ENCODE measurements at regions of chr3 and their contacts with region 1.

Region 1: GRCh38 chr3:39911465-39912309 is 102.3 kb downstream of the MYRIP start:
- DNase-seq: peak; percentile 97
- H3K4me3 ChIP-seq: no peak overlapping the region
- H3K27ac ChIP-seq: peak overlapping the region; percentile 67
- H3K4me1 ChIP-seq: peaks cover 48% of the 10 kb centered on the region
- H3K27me3 ChIP-seq: no peaks in the 10 kb centered on the region
- CTCF ChIP-seq: peak in 1 of 2 donors; percentile 44
- POLR2A ChIP-seq: no peak

Region 2: GRCh38 chr3:39748002-39748401 is 163.7 kb before region 1 on chr3:
- CTCF ChIA-PET with region 1: interaction called, 6 read pairs
- POLR2A ChIA-PET with region 1: no interaction called
- dilution Hi-C with region 1: no loop called
- intact Hi-C with region 1: loop called (anchors 2 kb)
- DNase-seq: peak; percentile 78
- H3K4me3 ChIP-seq: no peak overlapping the region
- H3K27ac ChIP-seq: peak overlapping the region; percentile 87
- H3K4me1 ChIP-seq: peaks cover 53% of the 10 kb centered on the region
- H3K27me3 ChIP-seq: no peaks in the 10 kb centered on the region
- CTCF ChIP-seq: no peak
- POLR2A ChIP-seq: no peak

Region 3: DNA sequence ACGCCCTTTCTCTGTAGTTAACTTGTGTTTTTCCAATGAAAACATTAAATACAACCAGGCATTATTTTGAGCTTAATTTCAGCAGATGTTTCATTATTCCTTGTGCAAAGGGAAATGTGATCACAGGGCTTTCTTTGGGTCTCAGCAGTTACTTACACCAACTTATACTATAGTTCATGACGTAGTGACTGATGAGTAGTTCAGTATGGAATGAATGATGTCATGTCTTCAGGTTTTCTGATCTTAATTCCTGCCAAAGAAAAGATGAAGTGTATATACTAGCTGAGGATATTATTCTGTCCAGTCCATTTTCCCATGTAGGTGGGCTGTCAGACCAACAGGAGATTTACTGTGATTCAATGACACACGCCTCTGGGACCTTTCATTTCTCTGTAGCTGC is 41.0 kb before region 1 on chr3:
- CTCF ChIA-PET with region 1: interaction called, 4 read pairs
- POLR2A ChIA-PET with region 1: no interaction called
- dilution Hi-C with region 1: no loop called
- intact Hi-C with region 1: loop called (anchors 2 kb)
- DNase-seq: peak; percentile 42
- H3K4me3 ChIP-seq: no peak overlapping the region
- H3K27ac ChIP-seq: no peak overlapping the region
- H3K4me1 ChIP-seq: peaks cover 9% of the 10 kb centered on the region
- H3K27me3 ChIP-seq: no peaks in the 10 kb centered on the region
- CTCF ChIP-seq: no peak
- POLR2A ChIP-seq: no peak

Region 4: GRCh38 chr3:39937874-39938273 is 26.2 kb after region 1 on chr3:
- CTCF ChIA-PET with region 1: no interaction called
- POLR2A ChIA-PET with region 1: no interaction called
- dilution Hi-C with region 1: no loop called
- intact Hi-C with region 1: loop called (anchors 2 kb)
- DNase-seq: peak; percentile 20
- H3K4me3 ChIP-seq: no peak overlapping the region
- H3K27ac ChIP-seq: no peak overlapping the region
- H3K4me1 ChIP-seq: peaks cover 25% of the 10 kb centered on the region
- H3K27me3 ChIP-seq: no peaks in the 10 kb centered on the region
- CTCF ChIP-seq: no peak
- POLR2A ChIP-seq: no peak

Region 5: GRCh38 chr3:39960515-39961191 is 49.0 kb after region 1 on chr3:
- CTCF ChIA-PET with region 1: no interaction called
- POLR2A ChIA-PET with region 1: no interaction called
- dilution Hi-C with region 1: no loop called
- intact Hi-C with region 1: loop called (anchors 1 kb)
- DNase-seq: peak; percentile 99
- H3K4me3 ChIP-seq: no peak overlapping the region
- H3K27ac ChIP-seq: peak overlapping the region; percentile 70
- H3K4me1 ChIP-seq: peaks cover 9% of the 10 kb centered on the region
- H3K27me3 ChIP-seq: no peaks in the 10 kb centered on the region
- CTCF ChIP-seq: no peak
- POLR2A ChIP-seq: no peak

Region 6: GRCh38 chr3:39981547-39982184 is 70.0 kb after region 1 on chr3:
- CTCF ChIA-PET with region 1: interaction called, 3 read pairs
- POLR2A ChIA-PET with region 1: no interaction called
- dilution Hi-C with region 1: no loop called
- intact Hi-C with region 1: loop called (anchors 5 kb)
- DNase-seq: peak; percentile 63
- H3K4me3 ChIP-seq: no peak overlapping the region
- H3K27ac ChIP-seq: no peak overlapping the region
- H3K4me1 ChIP-seq: peaks cover 18% of the 10 kb centered on the region
- H3K27me3 ChIP-seq: no peaks in the 10 kb centered on the region
- CTCF ChIP-seq: no peak
- POLR2A ChIP-seq: no peak